ENCODE measurements at regions of chr1 and their contacts with region 1.

Region 1: DNA sequence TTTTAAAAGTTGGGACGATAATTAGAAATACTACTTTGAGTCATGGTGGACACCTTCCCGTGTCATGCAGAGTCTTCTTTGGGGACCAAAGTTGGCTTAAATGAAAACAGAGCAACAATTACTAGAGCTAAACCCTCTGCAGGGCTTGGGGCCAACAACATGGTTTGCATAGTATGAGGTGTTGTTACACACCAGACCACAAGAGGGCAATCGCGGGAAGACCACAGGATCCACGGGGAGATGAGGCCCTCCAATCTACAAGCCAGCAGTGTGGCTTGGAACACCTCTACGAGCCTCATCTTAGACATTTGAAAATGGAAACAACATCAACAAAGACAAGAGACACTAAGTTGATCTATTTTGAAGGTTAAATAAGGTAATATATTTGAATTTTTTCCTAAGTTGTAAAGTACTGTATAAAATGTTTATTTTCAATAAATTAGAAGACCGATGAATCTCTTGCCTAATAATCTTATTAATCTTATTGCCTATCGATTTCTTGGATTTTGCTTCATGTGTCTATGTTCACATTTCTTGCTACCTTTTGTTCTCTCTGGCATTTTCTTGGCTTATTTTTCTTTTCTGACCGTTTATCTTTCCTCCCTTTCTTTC is 8.2 kb upstream of the SMCP start:
- DNase-seq: peak in 7 of 9 donors; percentile 8 to 53 (median 30)
- ATAC-seq: peak; percentile 60
- H3K4me3 ChIP-seq: no peak overlapping the region
- H3K4me3 Mint-ChIP-seq: no peak overlapping the region
- H3K27ac ChIP-seq: no peak overlapping the region
- H3K27ac Mint-ChIP-seq: no peak overlapping the region
- H3K4me1 ChIP-seq: no peaks in the 10 kb centered on the region
- H3K4me1 Mint-ChIP-seq: no peaks in the 10 kb centered on the region
- H3K27me3 ChIP-seq: no peaks in the 10 kb centered on the region
- H3K27me3 Mint-ChIP-seq: peaks cover 4 to 21% (median 12%) of the 10 kb centered on the region in 5 donors

Region 2: GRCh38 chr1:152824964-152825363 is 45.0 kb before region 1 on chr1:
- CTCF ChIA-PET with region 1: no interaction called
- POLR2A ChIA-PET with region 1: no interaction called
- intact Hi-C with region 1: no loop called
- DNase-seq: no peak
- ATAC-seq: no peak
- H3K4me3 ChIP-seq: no peak overlapping the region
- H3K4me3 Mint-ChIP-seq: no peak overlapping the region
- H3K27ac ChIP-seq: no peak overlapping the region
- H3K27ac Mint-ChIP-seq: no peak overlapping the region
- H3K4me1 ChIP-seq: no peaks in the 10 kb centered on the region
- H3K4me1 Mint-ChIP-seq: no peaks in the 10 kb centered on the region
- H3K27me3 ChIP-seq: peaks cover 0 to 4% of the 10 kb centered on the region in 2 donors
- H3K27me3 Mint-ChIP-seq: peaks cover 18 to 52% (median 40%) of the 10 kb centered on the region in 5 donors

Region 3: DNA sequence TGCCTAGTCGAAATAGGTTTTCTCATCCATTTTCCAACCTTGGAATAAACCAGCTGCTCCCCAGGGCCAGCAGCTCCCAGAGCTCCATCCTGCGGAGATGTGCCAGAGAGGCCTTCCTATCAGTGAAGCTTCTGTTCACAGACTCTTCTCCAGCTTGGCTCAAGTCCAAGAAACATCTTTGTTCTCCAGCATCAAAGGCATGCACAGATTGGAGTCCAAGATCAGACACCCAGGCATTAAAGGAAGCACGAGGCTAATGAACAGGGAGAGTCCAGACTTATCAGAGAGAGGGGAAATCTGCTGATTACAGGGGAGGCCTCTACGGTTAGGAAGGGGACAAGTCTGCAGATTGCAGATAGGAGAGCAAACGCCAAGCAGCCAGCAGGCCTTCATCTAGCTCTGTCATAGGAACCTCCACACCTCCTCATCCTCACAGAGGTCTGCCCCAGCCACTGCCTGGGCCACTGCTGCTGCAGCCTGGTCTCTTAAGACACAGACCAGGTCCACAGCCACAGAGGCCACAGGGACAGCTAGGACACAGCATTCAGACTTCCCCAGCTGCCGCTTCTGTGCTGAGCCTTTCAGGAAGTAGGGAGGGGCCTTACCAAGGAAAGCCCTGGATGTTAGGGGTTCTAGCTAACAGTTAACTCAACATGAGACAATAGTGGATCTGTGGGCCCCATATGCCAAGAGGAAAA is 350.8 kb after region 1 on chr1:
- CTCF ChIA-PET with region 1: no interaction called
- POLR2A ChIA-PET with region 1: no interaction called
- intact Hi-C with region 1: loop called (anchors 1 to 2 kb)
- DNase-seq: no peak
- ATAC-seq: no peak
- H3K4me3 ChIP-seq: no peak overlapping the region
- H3K4me3 Mint-ChIP-seq: no peak overlapping the region
- H3K27ac ChIP-seq: no peak overlapping the region
- H3K27ac Mint-ChIP-seq: no peak overlapping the region
- H3K4me1 ChIP-seq: no peaks in the 10 kb centered on the region
- H3K4me1 Mint-ChIP-seq: peaks cover 0 to 10% (median 5%) of the 10 kb centered on the region in 7 donors
- H3K27me3 ChIP-seq: peaks cover 0 to 4% of the 10 kb centered on the region in 2 donors
- H3K27me3 Mint-ChIP-seq: peaks cover 12 to 25% (median 17%) of the 10 kb centered on the region in 5 donors

Region 4: GRCh38 chr1:153277817-153278216 is 407.9 kb after region 1 on chr1:
- CTCF ChIA-PET with region 1: no interaction called
- POLR2A ChIA-PET with region 1: no interaction called
- intact Hi-C with region 1: loop called in 1 of 2 experiments (anchors 5 kb)
- DNase-seq: peak in 4 of 9 donors; percentile 14 to 40 (median 24)
- ATAC-seq: peak; percentile 70
- H3K4me3 ChIP-seq: no peak overlapping the region
- H3K4me3 Mint-ChIP-seq: no peak overlapping the region
- H3K27ac ChIP-seq: no peak overlapping the region
- H3K27ac Mint-ChIP-seq: no peak overlapping the region
- H3K4me1 ChIP-seq: no peaks in the 10 kb centered on the region
- H3K4me1 Mint-ChIP-seq: no peaks in the 10 kb centered on the region
- H3K27me3 ChIP-seq: peaks cover 0 to 4% of the 10 kb centered on the region in 2 donors
- H3K27me3 Mint-ChIP-seq: peaks cover 23 to 41% (median 38%) of the 10 kb centered on the region in 5 donors